Calu3 (cell line): ENCODE measurements at regions of chr17 and their contacts with region 1.

Region 1: GRCh38 chr17:78250891-78251794 is 19.7 kb downstream of the TMEM235 start:
- DNase-seq: peak; percentile 93
- H3K4me3 Mint-ChIP-seq: no peak overlapping the region
- H3K27ac Mint-ChIP-seq: no peak overlapping the region
- H3K4me1 Mint-ChIP-seq: peaks cover 15% of the 10 kb centered on the region
- H3K27me3 Mint-ChIP-seq: peaks cover 10% of the 10 kb centered on the region
- CTCF ChIP-seq: peak; percentile 95

Region 2: GRCh38 chr17:78082988-78083387 is 168.2 kb before region 1 on chr17:
- CTCF ChIA-PET with region 1: interaction called, 33 read pairs
- intact Hi-C with region 1: loop called (anchors 2 kb)
- DNase-seq: no peak
- H3K4me3 Mint-ChIP-seq: no peak overlapping the region
- H3K27ac Mint-ChIP-seq: no peak overlapping the region
- H3K4me1 Mint-ChIP-seq: no peaks in the 10 kb centered on the region
- H3K27me3 Mint-ChIP-seq: no peaks in the 10 kb centered on the region
- CTCF ChIP-seq: no peak

Region 3: GRCh38 chr17:78112518-78113226 is 138.5 kb before region 1 on chr17:
- CTCF ChIA-PET with region 1: interaction called, 4 read pairs
- intact Hi-C with region 1: loop called (anchors 2 kb)
- DNase-seq: peak; percentile 89
- H3K4me3 Mint-ChIP-seq: no peak overlapping the region
- H3K27ac Mint-ChIP-seq: peak overlapping the region; percentile 2
- H3K4me1 Mint-ChIP-seq: peaks cover 8% of the 10 kb centered on the region
- H3K27me3 Mint-ChIP-seq: no peaks in the 10 kb centered on the region
- CTCF ChIP-seq: peak; percentile 97

Region 4: GRCh38 chr17:78186692-78187595 is 64.2 kb before region 1 on chr17 and contains the starts of genes AFMID and TK1:
- CTCF ChIA-PET with region 1: interaction called, 12 read pairs
- intact Hi-C with region 1: no loop called
- DNase-seq: peak; percentile 99
- H3K4me3 Mint-ChIP-seq: peak within 1 kb of the TSS; percentile 78
- H3K27ac Mint-ChIP-seq: peak within 1 kb of the TSS; percentile 66
- H3K4me1 Mint-ChIP-seq: peaks cover 23% of the 10 kb centered on the region
- H3K27me3 Mint-ChIP-seq: no peaks in the 10 kb centered on the region
- CTCF ChIP-seq: peak; percentile 76
- total RNA-seq, gene AFMID: 28.5 and 30.8 TPM in 2 replicates
- total RNA-seq, gene TK1: 89.7 and 95.3 TPM in 2 replicates

Region 5: DNA sequence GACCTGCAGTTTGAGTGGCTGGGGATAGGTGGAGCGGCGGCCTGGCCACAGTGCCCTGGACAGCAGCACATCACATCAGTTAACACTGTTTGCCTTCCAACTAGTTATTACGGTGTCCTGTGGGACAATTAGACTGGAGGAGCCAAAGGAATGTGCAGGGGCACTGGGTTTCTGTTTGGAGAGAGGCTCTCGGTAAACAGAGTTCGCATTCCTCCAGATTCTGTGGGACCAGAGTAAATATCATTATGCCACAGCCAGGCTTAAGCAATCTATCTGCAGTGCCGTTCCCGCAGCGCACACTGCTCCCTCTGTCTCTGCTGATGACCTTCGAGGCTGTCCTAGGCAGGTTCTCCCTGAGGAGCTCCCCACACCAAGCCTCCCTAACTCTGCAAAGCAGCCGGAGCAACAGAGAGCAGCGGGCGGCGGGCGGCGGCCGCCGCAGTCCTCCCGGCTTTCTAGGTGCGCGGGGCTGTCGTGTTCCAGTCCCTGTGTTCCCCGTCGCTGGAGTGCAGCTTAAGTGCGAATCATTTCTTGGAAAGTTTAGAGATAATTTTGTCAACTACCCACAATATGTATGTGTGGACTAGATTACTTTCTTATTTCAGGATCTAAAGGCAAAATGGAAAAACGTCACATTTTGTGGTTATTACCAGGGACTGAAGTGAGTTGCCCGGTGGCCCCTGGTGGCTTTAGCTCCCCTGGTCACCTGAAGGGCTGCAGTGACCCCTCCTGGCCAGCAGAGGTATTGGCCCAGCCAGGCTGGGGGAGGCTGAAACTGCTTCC is 170.5 kb after region 1 on chr17:
- CTCF ChIA-PET with region 1: interaction called, 28 read pairs
- intact Hi-C with region 1: loop called (anchors 2 kb)
- DNase-seq: peak; percentile 86
- H3K4me3 Mint-ChIP-seq: no peak overlapping the region
- H3K27ac Mint-ChIP-seq: no peak overlapping the region
- H3K4me1 Mint-ChIP-seq: no peaks in the 10 kb centered on the region
- H3K27me3 Mint-ChIP-seq: no peaks in the 10 kb centered on the region
- CTCF ChIP-seq: peak; percentile 93